Activated CD4-positive, alpha-beta T cell treated with anti-CD3 and anti-CD28 coated beads, Interleukin-2, amount 10 ng/mL, durations not matched to agents 24 days and 14 days (primary cell): ENCODE measurements at regions of chr19 and their contacts with region 1.

Region 1: DNA sequence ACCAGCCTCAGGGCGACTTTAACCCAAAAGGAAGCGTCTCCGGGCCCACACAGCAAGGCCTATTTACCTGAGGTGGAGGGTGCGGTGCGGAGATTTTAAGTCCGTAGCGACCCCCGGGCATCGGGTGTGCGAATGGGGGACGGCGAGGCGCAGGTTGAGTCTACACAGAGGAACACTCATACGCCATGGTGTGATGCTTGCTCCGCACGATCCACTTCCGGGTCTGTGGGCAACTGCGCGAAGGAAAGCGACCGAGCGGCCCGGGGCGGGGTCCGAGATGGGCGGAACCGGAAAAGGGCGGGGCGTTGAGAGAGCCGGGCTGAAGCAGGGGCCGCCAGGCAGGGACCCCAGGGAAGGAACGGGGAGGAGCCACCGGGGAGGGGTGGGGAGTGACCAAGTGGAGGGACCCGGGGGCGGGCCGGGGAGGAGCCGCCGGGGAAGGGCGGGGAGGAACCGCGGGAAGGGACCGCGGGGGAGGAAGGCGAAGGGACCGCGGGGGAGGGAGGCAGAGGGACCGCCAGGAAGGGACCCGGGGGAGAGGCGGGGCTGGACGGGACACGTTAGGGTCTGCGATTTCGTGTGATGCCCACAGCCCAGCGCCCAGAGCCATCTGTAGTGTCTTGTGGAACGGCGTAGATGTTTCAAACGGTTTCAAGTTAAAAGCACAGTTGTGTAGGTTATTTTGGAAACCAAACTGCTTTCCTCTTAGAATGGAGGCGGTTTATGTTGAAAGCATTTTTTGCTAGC is at the start of gene ZNF160:
- DNase-seq: peak; percentile 100
- H3K4me3 Mint-ChIP-seq: peak within 1 kb of the TSS; percentile 93
- H3K27ac Mint-ChIP-seq: peak within 1 kb of the TSS; percentile 90
- H3K4me1 Mint-ChIP-seq: peaks cover 19% of the 10 kb centered on the region
- H3K27me3 Mint-ChIP-seq: no peaks in the 10 kb centered on the region
- total RNA-seq, gene ZNF160: 30.6 and 37.5 TPM in 2 replicates

Region 2: DNA sequence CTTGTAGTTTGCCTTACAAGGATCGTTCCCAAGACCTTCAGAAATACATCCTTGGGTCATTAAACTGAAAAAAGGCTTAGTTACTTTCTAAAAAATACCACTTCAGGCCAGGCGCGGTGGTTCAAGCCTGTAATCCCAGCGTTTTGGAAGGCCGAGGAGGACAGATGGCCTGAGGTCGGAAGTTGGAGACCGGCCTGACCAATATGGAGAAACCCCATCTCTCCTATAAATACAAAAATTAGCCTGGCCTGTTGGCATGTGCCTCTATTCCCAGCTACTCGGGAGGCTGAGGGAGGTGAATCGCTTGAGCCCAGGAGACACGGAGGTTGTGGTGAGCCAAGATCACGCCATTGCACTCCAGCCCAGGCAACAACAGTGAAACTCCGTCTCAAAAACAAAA is 279.7 kb before region 1 on chr19:
- intact Hi-C with region 1: no loop called
- DNase-seq: no peak
- H3K4me3 Mint-ChIP-seq: no peak overlapping the region
- H3K27ac Mint-ChIP-seq: no peak overlapping the region
- H3K4me1 Mint-ChIP-seq: peaks cover 13% of the 10 kb centered on the region
- H3K27me3 Mint-ChIP-seq: no peaks in the 10 kb centered on the region

Region 3: GRCh38 chr19:52942386-52943133 is 160.8 kb before region 1 on chr19:
- intact Hi-C with region 1: loop called (anchors 5 kb)
- DNase-seq: peak; percentile 99
- H3K4me3 Mint-ChIP-seq: peak overlapping the region; percentile 90
- H3K27ac Mint-ChIP-seq: peak overlapping the region; percentile 88
- H3K4me1 Mint-ChIP-seq: peaks cover 19% of the 10 kb centered on the region
- H3K27me3 Mint-ChIP-seq: no peaks in the 10 kb centered on the region

Region 4: DNA sequence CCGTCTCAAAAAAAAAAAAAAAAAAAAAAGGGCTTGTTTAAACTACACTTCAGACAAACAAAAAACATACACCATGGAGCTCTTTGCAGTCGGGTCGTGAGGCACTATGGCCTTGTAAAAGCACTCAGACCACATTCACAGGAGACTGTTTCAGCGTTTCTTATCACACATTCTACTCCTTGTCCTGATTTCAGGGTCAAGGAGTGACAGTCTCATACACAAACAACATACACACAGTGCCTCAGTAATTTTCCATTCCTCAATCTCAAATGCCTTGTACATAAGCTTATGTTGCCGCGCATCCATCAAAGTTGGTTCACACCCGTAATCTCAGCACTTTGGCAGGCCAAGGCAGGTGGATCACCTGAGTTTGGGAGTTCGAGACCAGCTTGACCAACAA is 128.7 kb before region 1 on chr19:
- intact Hi-C with region 1: no loop called
- DNase-seq: no peak
- H3K4me3 Mint-ChIP-seq: no peak overlapping the region
- H3K27ac Mint-ChIP-seq: no peak overlapping the region
- H3K4me1 Mint-ChIP-seq: no peaks in the 10 kb centered on the region
- H3K27me3 Mint-ChIP-seq: no peaks in the 10 kb centered on the region

Region 5: GRCh38 chr19:53333463-53334449 is 230.4 kb after region 1 on chr19 and contains the start of gene ZNF845:
- intact Hi-C with region 1: loop called (anchors 1 kb)
- DNase-seq: peak; percentile 99
- H3K4me3 Mint-ChIP-seq: peak within 1 kb of the TSS; percentile 89
- H3K27ac Mint-ChIP-seq: peak within 1 kb of the TSS; percentile 88
- H3K4me1 Mint-ChIP-seq: peaks cover 11% of the 10 kb centered on the region
- H3K27me3 Mint-ChIP-seq: no peaks in the 10 kb centered on the region
- total RNA-seq, gene ZNF845: 6.1 and 6.4 TPM in 2 replicates

Region 6: GRCh38 chr19:53394974-53395839 is 291.8 kb after region 1 on chr19 and contains the start of gene ZNF765:
- intact Hi-C with region 1: loop called (anchors 1 kb)
- DNase-seq: peak; percentile 99
- H3K4me3 Mint-ChIP-seq: peak within 1 kb of the TSS; percentile 94
- H3K27ac Mint-ChIP-seq: peak within 1 kb of the TSS; percentile 93
- H3K4me1 Mint-ChIP-seq: peaks cover 16% of the 10 kb centered on the region
- H3K27me3 Mint-ChIP-seq: no peaks in the 10 kb centered on the region
- total RNA-seq, gene ZNF765: 11.0 and 11.8 TPM in 2 replicates